ENCODE measurements at regions of chr15 and their contacts with region 1.

Region 1: DNA sequence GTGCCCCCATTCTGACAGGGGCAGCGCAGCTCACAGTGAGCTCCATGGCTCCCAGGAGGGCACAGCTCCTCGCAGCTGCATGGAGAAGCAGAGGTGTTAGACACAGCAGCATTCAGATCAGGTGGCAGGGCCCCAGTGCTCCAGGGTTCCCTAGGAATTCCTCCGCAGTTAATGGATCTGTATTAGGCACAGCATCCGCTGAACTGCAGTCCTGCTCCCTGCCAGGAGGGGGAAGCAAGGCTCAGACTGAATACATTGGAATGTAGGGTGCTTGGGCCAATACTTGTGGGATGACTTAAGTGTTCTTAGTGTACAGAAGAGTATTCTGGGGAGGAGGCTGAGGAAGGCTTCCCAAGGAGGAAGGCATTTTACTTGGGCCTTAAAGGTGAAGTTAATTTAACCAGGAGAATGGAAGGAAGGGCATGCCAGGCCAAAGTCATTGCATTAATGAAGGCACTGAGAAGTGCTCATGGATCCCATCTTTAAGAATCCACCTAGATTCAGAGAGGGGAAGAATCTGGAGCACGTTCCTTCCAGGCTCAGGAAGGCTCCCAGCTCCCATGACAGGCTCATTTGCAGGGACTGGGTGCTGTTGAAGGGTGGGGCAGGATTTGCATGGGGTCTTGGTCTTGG is 111.6 kb downstream of the RAB11A start:
- DNase-seq: peak; percentile 33 to 71
- ATAC-seq: peak; percentile 86

Region 2: GRCh38 chr15:66126031-66126441 is 145.1 kb after region 1 on chr15:
- intact Hi-C with region 1: no loop called
- DNase-seq: no peak
- ATAC-seq: no peak

Region 3: DNA sequence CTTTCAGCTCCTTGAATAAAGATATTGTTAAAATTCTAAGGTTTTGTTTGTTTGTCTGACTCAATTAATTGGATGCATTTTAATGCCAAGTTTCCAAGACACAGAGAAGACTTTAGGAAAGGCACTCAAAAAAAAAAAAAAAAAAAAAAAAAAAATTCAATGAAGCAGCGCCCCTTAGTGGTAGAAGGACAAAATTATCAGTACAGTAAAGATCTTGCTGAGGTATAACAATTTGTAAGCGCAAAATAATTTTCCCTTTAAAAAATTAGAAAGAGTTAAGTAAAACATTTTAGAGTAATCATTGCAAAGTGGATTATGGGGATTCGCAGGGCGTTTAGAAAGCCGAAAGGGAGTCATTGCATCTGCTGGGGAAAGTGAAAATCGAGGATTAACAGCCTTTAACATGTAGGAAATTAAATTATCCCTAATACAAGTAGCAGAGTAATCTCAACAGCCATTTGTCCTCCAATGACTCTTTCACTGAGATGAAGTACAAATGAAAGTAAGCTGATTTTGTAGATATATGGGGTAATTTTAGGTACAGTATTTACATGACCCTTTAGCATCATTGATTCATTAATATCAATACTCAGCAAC is 306.6 kb after region 1 on chr15:
- intact Hi-C with region 1: loop called in 1 of 2 experiments (anchors 10 kb)
- DNase-seq: no peak
- ATAC-seq: no peak